ENCODE measurements at regions of chr7 and their contacts with region 1.

Region 1: DNA sequence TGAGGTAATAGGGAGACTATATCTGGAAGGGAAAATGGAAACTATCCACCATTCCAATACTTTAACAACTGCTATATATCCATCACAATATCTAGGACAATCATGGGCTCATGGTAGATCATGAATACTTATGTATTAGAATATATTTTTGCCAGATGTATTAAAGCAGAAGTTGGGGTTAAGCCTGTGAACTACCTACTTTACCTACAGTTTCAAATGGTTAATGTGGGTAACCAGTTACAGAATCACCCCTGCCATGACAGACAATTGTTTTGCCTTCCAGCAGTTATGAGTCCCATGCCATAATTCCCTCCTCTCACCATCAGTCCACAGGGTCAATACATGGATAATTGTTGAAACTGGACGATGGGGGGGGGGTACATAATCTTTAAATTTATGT is 29.9 kb upstream of the RAPGEF5 start:
- DNase-seq: no peak
- ATAC-seq: peak; percentile 80
- H3K4me3 ChIP-seq: no peak overlapping the region
- H3K27ac ChIP-seq: peak overlapping the region; percentile 76
- H3K4me1 ChIP-seq: peaks cover 32% of the 10 kb centered on the region
- H3K27me3 ChIP-seq: no peaks in the 10 kb centered on the region
- CTCF ChIP-seq: no peak
- EP300 ChIP-seq: peak in 1 of 2 experiments; percentile 40; a peak in 1 of 4 replicates
- POLR2A ChIP-seq: no peak
- RAD21 ChIP-seq: no peak

Region 2: GRCh38 chr7:22402250-22402649 is 15.4 kb after region 1 on chr7:
- CTCF ChIA-PET with region 1: no interaction called
- POLR2A ChIA-PET with region 1: no interaction called
- RAD21 ChIA-PET with region 1: interaction called, 3 read pairs
- SMC1A ChIA-PET with region 1: interaction called, 19 read pairs
- in situ Hi-C with region 1: no loop called
- intact Hi-C with region 1: no loop called
- DNase-seq: no peak
- ATAC-seq: peak; percentile 62
- H3K4me3 ChIP-seq: no peak overlapping the region
- H3K27ac ChIP-seq: peak overlapping the region; percentile 69
- H3K4me1 ChIP-seq: peaks cover 17% of the 10 kb centered on the region
- H3K27me3 ChIP-seq: no peaks in the 10 kb centered on the region; a peak in 1 of 4 replicates
- CTCF ChIP-seq: no peak
- EP300 ChIP-seq: no peak
- POLR2A ChIP-seq: no peak
- RAD21 ChIP-seq: no peak

Region 3: DNA sequence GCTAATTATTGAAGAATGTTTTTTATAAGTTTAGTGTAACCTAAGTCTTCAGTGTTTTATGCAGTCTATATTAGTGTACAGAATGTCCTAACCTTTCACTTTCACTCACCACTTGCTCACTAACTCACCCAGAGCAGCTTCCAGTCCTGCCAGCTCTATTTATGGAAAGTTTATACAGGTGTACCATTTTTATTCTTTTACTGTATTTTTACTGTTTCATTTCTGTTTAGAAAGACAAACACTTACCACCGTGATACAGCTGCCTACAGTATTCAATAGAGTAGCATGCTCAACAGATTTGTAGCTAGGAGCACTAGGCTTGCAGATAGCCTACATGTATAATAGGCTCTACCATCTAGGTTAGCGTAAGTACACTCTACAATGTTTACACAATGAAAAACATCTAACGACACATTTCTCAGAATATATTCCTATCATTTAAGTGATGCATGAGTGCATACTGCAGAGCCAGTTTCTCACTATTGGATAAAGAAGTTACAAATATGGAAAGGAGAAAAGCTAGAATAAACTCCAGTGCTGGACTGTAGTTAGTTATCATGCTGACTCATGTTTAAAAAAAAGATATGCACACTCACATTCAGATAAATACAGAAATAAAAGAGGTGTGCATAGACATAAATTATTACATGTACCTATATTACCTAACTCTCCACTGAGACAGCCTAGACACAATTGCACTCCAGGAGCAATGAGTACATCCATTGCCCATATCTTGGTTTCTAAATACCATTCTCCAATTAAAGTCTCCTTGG is 82.7 kb after region 1 on chr7:
- CTCF ChIA-PET with region 1: no interaction called
- POLR2A ChIA-PET with region 1: no interaction called
- RAD21 ChIA-PET with region 1: no interaction called
- SMC1A ChIA-PET with region 1: no interaction called
- in situ Hi-C with region 1: no loop called
- intact Hi-C with region 1: no loop called
- DNase-seq: no peak
- ATAC-seq: peak; percentile 39; the same call in 1 of the 3 replicates
- H3K4me3 ChIP-seq: no peak overlapping the region
- H3K27ac ChIP-seq: no peak overlapping the region
- H3K4me1 ChIP-seq: no peaks in the 10 kb centered on the region
- H3K27me3 ChIP-seq: peaks cover 0 to 2% of the 10 kb centered on the region in 2 experiments; a peak in 1 of 4 replicates
- CTCF ChIP-seq: no peak
- EP300 ChIP-seq: no peak
- POLR2A ChIP-seq: no peak
- RAD21 ChIP-seq: no peak